Heart left ventricle (tissue), 16 donors: ENCODE measurements at regions of chr9 and their contacts with region 1.

Region 1: DNA sequence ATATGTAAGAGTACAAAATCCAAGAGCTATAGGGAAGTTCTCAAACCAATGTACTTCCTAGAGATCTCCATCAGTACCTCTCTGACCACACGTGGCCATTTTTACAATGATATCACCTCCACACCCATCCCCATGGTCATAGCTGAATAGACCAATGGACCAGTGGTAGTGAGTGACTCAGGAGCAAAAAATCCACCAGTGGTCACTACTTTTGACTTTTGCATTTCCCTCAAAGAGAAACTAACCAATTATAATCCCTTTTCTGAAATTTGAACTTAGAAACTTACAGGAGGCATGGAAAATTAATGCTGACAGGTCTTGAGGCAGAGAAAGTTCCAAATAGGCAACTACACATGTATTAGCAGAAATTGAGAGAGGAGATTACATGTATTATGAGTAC is 238.4 kb downstream of the TRPM3 start:
- DNase-seq: no peak
- ATAC-seq: no peak
- H3K4me3 ChIP-seq: no peak overlapping the region
- H3K27ac ChIP-seq: no peak overlapping the region
- H3K4me1 ChIP-seq: peaks cover 0 to 7% (median 0%) of the 10 kb centered on the region in 12 donors
- H3K27me3 ChIP-seq: no peaks in the 10 kb centered on the region
- CTCF ChIP-seq: no peak
- POLR2A ChIP-seq: no peak

Region 2: DNA sequence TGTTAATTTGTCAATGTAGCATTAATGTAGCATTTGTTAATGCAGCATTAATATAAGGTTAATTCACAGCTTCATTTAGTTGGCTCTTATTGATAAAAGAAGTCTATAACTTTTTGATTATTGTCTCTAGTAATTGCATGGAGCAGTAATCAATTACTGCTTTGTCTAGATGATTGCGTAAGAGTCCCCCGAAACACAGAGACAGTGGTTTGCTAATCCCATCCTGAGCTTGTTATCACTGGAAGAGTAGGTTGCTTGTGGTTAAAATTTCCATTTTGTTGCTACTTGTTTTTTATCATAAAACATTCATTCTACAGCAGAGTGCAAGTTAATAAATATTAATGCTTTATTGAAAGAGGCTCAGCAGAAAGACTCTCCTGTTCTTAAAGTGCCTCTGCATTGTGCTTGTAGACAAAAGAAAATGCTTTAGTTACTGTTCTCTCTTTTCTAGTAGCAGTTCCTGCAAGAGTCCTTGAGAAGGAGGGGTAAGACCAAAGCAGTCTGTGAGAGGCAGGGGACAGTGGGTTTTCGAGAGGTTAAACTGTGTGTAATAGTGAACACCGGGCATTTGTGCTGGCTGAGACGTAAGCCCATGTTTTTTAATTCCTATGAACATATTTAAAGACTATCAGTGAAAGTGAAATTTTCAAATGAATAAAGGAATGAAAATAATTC is 53.3 kb before region 1 on chr9:
- intact Hi-C with region 1: loop called in 1 of 10 experiments (anchors 10 kb)
- DNase-seq: no peak
- ATAC-seq: no peak
- H3K4me3 ChIP-seq: no peak overlapping the region
- H3K27ac ChIP-seq: no peak overlapping the region
- H3K4me1 ChIP-seq: no peaks in the 10 kb centered on the region
- H3K27me3 ChIP-seq: no peaks in the 10 kb centered on the region
- CTCF ChIP-seq: no peak
- POLR2A ChIP-seq: no peak

Region 3: GRCh38 chr9:70947086-70947485 is 64.0 kb after region 1 on chr9:
- intact Hi-C with region 1: no loop called
- DNase-seq: no peak
- ATAC-seq: no peak
- H3K4me3 ChIP-seq: no peak overlapping the region
- H3K27ac ChIP-seq: no peak overlapping the region
- H3K4me1 ChIP-seq: no peaks in the 10 kb centered on the region
- H3K27me3 ChIP-seq: no peaks in the 10 kb centered on the region
- CTCF ChIP-seq: no peak
- POLR2A ChIP-seq: no peak